MCF 10A (cell line): ENCODE measurements at regions of chr12 and their contacts with region 1.

Region 1: GRCh38 chr12:55817346-55818139 is at the starts of genes ORMDL2 and SARNP:
- DNase-seq: peak; percentile 100
- H3K4me3 Mint-ChIP-seq: no peak within 1 kb of the TSS
- H3K27ac Mint-ChIP-seq: no peak within 1 kb of the TSS
- H3K4me1 Mint-ChIP-seq: peaks cover 19% of the 10 kb centered on the region
- H3K27me3 Mint-ChIP-seq: no peaks in the 10 kb centered on the region
- CTCF ChIP-seq: no peak
- total RNA-seq, gene ORMDL2: 54.6 and 55.9 TPM in 2 replicates
- total RNA-seq, gene SARNP: 39.2 and 61.1 TPM in 2 replicates

Region 2: GRCh38 chr12:55728939-55729823 is 88.4 kb before region 1 on chr12 and contains the start of gene CD63:
- CTCF ChIA-PET with region 1: no interaction called
- POLR2A ChIA-PET with region 1: interaction called, 25 read pairs
- intact Hi-C with region 1: no loop called
- DNase-seq: peak; percentile 93
- H3K4me3 Mint-ChIP-seq: peak within 1 kb of the TSS; percentile 76
- H3K27ac Mint-ChIP-seq: peak within 1 kb of the TSS; percentile 82
- H3K4me1 Mint-ChIP-seq: peaks cover 22% of the 10 kb centered on the region
- H3K27me3 Mint-ChIP-seq: no peaks in the 10 kb centered on the region
- CTCF ChIP-seq: no peak
- total RNA-seq, gene CD63: 552 and 724 TPM in 2 replicates

Region 3: GRCh38 chr12:55797068-55797467 is 20.5 kb before region 1 on chr12:
- CTCF ChIA-PET with region 1: interaction called, 3 read pairs
- POLR2A ChIA-PET with region 1: interaction called, 17 read pairs
- intact Hi-C with region 1: no loop called
- DNase-seq: peak; percentile 41
- H3K4me3 Mint-ChIP-seq: no peak overlapping the region
- H3K27ac Mint-ChIP-seq: no peak overlapping the region
- H3K4me1 Mint-ChIP-seq: peaks cover 4% of the 10 kb centered on the region
- H3K27me3 Mint-ChIP-seq: no peaks in the 10 kb centered on the region
- CTCF ChIP-seq: peak; percentile 13

Region 4: DNA sequence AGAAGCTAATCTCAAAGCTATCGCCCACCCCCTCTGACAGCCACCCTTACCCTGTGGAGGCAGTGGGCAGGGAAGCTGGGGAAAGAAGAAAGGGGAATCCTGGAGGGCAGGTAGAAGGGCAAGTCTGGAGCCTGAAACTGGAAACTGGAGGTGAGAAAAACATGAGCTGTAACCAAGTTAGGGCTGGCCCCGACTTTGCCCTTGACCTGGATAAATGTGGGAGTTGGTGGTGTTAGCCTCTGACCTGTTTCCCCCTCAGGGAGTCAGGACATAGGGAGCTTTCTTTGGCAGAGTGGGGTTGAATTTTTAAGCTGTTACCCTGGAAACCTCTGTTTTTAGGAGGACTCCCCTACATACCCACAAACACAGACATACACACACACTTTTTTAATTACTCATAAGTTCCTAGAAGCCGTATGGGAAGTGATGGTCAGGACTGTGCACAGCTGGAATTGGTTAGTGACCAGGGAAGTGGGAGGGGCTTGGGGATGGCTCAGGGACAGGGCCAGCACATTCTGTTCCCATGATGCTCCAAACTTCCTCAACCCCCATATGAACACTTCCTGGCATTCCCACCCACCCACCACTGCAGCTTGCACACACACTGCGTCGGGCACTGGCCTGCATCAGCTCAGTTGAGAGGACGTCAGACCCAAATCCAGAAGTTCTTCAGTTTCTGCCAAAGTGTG is 30.2 kb after region 1 on chr12:
- CTCF ChIA-PET with region 1: interaction called, 3 read pairs
- POLR2A ChIA-PET with region 1: interaction called, 10 read pairs
- intact Hi-C with region 1: no loop called
- DNase-seq: peak; percentile 97
- H3K4me3 Mint-ChIP-seq: peak overlapping the region; percentile 52
- H3K27ac Mint-ChIP-seq: peak overlapping the region; percentile 99
- H3K4me1 Mint-ChIP-seq: peaks cover 20% of the 10 kb centered on the region
- H3K27me3 Mint-ChIP-seq: no peaks in the 10 kb centered on the region
- CTCF ChIP-seq: no peak

Region 5: GRCh38 chr12:55940065-55940732 is 122.7 kb after region 1 on chr12:
- CTCF ChIA-PET with region 1: interaction called, 15 read pairs
- POLR2A ChIA-PET with region 1: interaction called, 207 read pairs
- intact Hi-C with region 1: loop called (anchors 1 kb)
- DNase-seq: peak; percentile 91
- H3K4me3 Mint-ChIP-seq: peak overlapping the region; percentile 48
- H3K27ac Mint-ChIP-seq: peak overlapping the region; percentile 52
- H3K4me1 Mint-ChIP-seq: peaks cover 49% of the 10 kb centered on the region
- H3K27me3 Mint-ChIP-seq: no peaks in the 10 kb centered on the region
- CTCF ChIP-seq: peak; percentile 85

Region 6: GRCh38 chr12:55973598-55974307 is 156.2 kb after region 1 on chr12 and contains the start of gene RAB5B:
- CTCF ChIA-PET with region 1: no interaction called
- POLR2A ChIA-PET with region 1: interaction called, 39 read pairs
- intact Hi-C with region 1: no loop called
- DNase-seq: peak; percentile 100
- H3K4me3 Mint-ChIP-seq: no peak within 1 kb of the TSS
- H3K27ac Mint-ChIP-seq: no peak within 1 kb of the TSS
- H3K4me1 Mint-ChIP-seq: peaks cover 25% of the 10 kb centered on the region
- H3K27me3 Mint-ChIP-seq: no peaks in the 10 kb centered on the region
- CTCF ChIP-seq: no peak
- total RNA-seq, gene RAB5B: 67.4 and 96.1 TPM in 2 replicates